ENCODE measurements at regions of chr22 and their contacts with region 1.

Region 1: DNA sequence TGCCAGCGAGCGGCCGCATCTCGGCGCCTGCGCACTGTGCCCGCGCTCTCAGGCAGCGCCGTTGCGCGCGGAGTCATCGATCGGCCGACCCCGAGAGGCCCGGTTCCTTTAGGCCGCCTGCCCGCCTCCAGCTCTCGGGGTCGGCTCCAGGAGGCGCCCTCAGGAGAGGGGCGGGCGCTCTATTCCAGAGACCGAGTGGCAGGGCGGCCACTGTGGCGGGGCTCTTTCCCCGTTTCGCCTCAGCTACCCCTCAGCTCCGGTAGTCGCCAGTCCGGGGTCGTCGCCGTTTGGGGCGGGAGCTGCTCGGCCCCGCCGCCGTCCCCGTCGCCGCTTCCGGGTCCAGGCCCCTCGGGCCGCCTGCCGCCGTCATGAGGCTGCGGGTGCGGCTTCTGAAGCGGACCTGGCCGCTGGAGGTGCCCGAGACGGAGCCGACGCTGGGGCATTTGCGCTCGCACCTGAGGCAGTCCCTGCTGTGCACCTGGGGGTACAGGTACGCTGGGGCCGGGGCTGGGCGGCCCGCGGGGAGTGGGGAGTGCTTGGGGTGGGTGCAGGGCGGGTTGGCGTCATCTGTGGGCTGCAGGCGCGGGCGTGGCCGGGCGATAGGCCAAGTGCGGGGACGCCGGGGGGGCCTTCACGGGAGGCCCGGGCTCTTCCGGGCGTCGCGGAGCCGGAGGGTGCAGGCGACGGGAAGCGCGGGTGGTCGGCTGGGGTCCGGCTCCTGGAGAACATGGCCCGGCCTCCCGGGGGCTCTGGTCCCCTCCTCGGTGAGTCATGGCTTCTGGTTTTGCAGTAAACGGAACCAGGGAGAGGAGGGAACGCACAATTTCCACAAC is at the start of gene FBXO7:
- DNase-seq: peak; percentile 97
- H3K4me3 ChIP-seq: peak within 1 kb of the TSS; percentile 72 to 90 (median 83)
- H3K27ac ChIP-seq: peak within 1 kb of the TSS; percentile 96 to 100 (median 100)
- H3K4me1 ChIP-seq: peaks cover 26 to 59% (median 52%) of the 10 kb centered on the region in 6 donors
- H3K27me3 ChIP-seq: no peaks in the 10 kb centered on the region
- CTCF ChIP-seq: peak in 7 of 11 experiments; percentile 20 to 64 (median 46)
- POLR2A ChIP-seq: peak in 2 of 3 donors; percentile 56 to 66
- total RNA-seq, gene FBXO7: 77.1 to 151 (median 115) TPM

Region 2: DNA sequence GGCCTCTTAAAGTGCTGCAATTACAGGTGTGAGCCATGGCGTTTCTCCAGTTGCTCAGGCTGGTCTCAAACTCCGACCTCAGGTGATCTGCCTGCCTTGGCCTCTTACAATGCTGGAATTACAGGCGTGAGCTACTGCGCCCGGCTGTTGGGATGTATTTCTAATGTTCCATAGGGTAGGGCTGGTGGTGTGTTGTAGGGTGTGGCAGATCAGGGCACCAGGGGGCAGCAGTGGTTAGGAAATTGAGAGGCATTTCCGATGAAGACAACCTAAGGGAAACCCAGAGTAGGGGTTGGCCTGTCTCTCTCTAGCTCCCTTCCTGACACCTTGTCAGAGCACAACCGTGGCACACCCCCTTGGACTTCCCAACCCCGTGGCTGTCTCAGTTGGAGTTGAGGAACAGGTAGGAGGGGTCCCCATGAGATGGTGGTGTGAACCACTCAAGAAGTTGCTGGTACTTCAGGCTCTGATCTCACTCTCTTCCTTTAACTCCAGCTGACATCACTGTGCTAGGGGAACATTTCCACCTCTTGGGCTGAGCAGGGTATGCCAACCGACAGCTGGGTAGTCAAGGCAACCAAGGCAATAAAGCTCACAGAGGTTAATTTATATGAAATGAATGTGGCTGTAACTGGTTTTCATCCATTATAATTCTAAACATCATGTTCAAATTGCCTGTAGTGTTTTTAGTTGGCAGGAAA is 497.6 kb before region 1 on chr22:
- intact Hi-C with region 1: loop called (anchors 5 kb)
- DNase-seq: peak; percentile 86
- H3K4me3 ChIP-seq: no peak overlapping the region
- H3K27ac ChIP-seq: no peak overlapping the region
- H3K4me1 ChIP-seq: peaks cover 0 to 12% (median 0%) of the 10 kb centered on the region in 6 donors
- H3K27me3 ChIP-seq: no peaks in the 10 kb centered on the region
- CTCF ChIP-seq: peak; percentile 42 to 82 (median 76)
- POLR2A ChIP-seq: no peak

Region 3: DNA sequence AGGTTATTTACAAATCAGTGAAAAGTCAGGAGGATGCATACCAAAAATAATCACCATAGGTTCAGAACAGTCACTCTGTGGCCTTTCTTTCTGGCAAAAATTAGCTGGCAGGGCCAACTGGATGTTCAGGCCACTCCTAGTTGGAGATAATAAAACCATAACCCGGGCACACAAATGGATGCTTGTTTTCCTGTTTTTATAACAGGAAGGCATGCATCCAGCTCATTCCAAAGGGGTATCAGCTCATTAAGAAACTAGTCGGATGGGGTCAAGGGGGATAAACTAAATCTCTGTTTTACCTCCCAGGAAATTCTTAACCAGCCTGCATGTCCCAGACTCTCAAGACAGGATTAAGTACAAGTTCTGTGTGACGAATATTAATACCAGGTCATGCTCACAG is 80.7 kb after region 1 on chr22:
- intact Hi-C with region 1: no loop called
- DNase-seq: no peak
- H3K4me3 ChIP-seq: no peak overlapping the region
- H3K27ac ChIP-seq: peak overlapping the region; percentile 9 to 69 (median 49)
- H3K4me1 ChIP-seq: peaks cover 0 to 20% (median 4%) of the 10 kb centered on the region in 6 donors
- H3K27me3 ChIP-seq: no peaks in the 10 kb centered on the region
- CTCF ChIP-seq: no peak
- POLR2A ChIP-seq: no peak

Measured in spleen (tissue), 13 donors.